ENCODE measurements at regions of chr6 and their contacts with region 1.

Region 1: GRCh38 chr6:85078071-85078470 is 313.7 kb upstream of the TBX18 start:
- DNase-seq: no peak

Region 2: DNA sequence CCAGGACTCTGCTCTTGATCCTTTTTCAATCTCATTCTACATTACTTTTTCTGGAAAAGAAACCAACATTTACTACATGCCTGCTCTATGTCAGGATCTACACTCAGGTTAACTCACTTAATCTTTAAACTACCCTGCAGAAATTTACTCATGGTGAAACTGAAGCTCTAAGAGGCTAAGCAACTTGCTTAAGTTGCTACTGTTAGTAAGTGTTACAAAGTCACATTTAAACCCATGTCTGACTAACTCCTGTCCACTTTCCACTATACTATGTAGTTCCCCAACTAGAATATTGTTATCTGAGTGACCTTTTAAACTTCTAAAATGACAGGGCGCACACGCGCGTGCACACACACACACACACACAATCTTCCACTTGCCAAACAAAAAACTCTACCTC is 855.6 kb before region 1 on chr6:
- CTCF ChIA-PET with region 1: interaction called, 10 read pairs
- POLR2A ChIA-PET with region 1: no interaction called
- DNase-seq: no peak

Measured in HEK293T (cell line).